H1 (cell line): ENCODE measurements at regions of chr6 and their contacts with region 1.

Region 1: GRCh38 chr6:40874495-40874894 is 164.5 kb downstream of the UNC5CL start:
- DNase-seq: peak in 1 of 2 experiments; percentile 58
- H3K4me3 ChIP-seq: no peak overlapping the region
- H3K27ac ChIP-seq: no peak overlapping the region
- H3K4me1 ChIP-seq: no peaks in the 10 kb centered on the region
- H3K27me3 ChIP-seq: no peaks in the 10 kb centered on the region
- CTCF ChIP-seq: peak; percentile 60 to 73 (median 63)
- EP300 ChIP-seq: no peak
- POLR2A ChIP-seq: no peak
- RAD21 ChIP-seq: peak; percentile 55 to 68; a peak in 3 of 4 replicates

Region 2: GRCh38 chr6:40845553-40845952 is 28.9 kb before region 1 on chr6:
- CTCF ChIA-PET with region 1: interaction called, 11 read pairs
- POLR2A ChIA-PET with region 1: no interaction called
- DNase-seq: peak; percentile 25 to 73
- H3K4me3 ChIP-seq: no peak overlapping the region
- H3K27ac ChIP-seq: no peak overlapping the region
- H3K4me1 ChIP-seq: no peaks in the 10 kb centered on the region
- H3K27me3 ChIP-seq: no peaks in the 10 kb centered on the region
- CTCF ChIP-seq: peak; percentile 59 to 91 (median 79)
- EP300 ChIP-seq: no peak
- POLR2A ChIP-seq: no peak
- RAD21 ChIP-seq: peak; percentile 79 to 85

Region 3: GRCh38 chr6:40918040-40918655 is 43.7 kb after region 1 on chr6:
- CTCF ChIA-PET with region 1: no interaction called
- POLR2A ChIA-PET with region 1: no interaction called
- DNase-seq: peak in 1 of 2 experiments; percentile 15
- H3K4me3 ChIP-seq: no peak overlapping the region
- H3K27ac ChIP-seq: no peak overlapping the region
- H3K4me1 ChIP-seq: peaks cover 0 to 13% (median 3%) of the 10 kb centered on the region in 4 experiments; a peak in 5 of 7 replicates
- H3K27me3 ChIP-seq: peaks cover 0 to 5% (median 0%) of the 10 kb centered on the region in 4 experiments; a peak in 1 of 7 replicates
- CTCF ChIP-seq: peak in 2 of 3 experiments; percentile 19 to 32; a peak in 2 of 4 replicates
- EP300 ChIP-seq: no peak
- POLR2A ChIP-seq: no peak
- RAD21 ChIP-seq: peak; percentile 55 to 66

Region 4: DNA sequence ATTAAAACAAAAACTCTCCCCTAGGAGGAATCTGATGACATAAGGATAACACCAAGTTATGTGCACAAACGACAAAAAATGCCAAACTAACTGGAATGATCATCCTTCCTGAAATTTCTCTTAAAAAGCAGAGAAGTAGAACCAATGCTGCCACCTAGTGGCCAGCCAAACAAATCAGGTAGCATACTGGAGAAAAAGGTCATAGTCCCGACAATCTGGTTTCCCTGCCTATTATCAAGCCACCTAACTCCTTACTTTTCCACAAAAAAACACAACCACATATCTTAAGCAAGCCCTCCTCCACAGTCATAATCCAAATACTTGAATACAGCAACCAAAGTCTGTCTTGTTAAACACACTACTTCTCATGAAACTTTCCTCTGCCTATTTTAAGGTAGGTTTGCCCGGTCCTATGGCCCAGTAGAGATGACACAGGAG is 192.4 kb after region 1 on chr6:
- CTCF ChIA-PET with region 1: no interaction called
- POLR2A ChIA-PET with region 1: no interaction called
- DNase-seq: peak in 1 of 2 experiments; percentile 70
- H3K4me3 ChIP-seq: no peak overlapping the region
- H3K27ac ChIP-seq: no peak overlapping the region
- H3K4me1 ChIP-seq: peaks cover 0 to 4% (median 1%) of the 10 kb centered on the region in 4 experiments; a peak in 2 of 7 replicates
- H3K27me3 ChIP-seq: no peaks in the 10 kb centered on the region
- CTCF ChIP-seq: peak in 2 of 3 experiments; percentile 54 to 79; a peak in 2 of 4 replicates
- EP300 ChIP-seq: no peak
- POLR2A ChIP-seq: no peak
- RAD21 ChIP-seq: peak; percentile 72 to 77